Heart left ventricle (tissue), 16 donors: ENCODE measurements at regions of chr1 and their contacts with region 1.

Region 1: GRCh38 chr1:23743287-23744052 is at the start of gene ELOA:
- DNase-seq: peak; percentile 77 to 90 (median 84)
- ATAC-seq: peak; percentile 66 to 97 (median 94)
- H3K4me3 ChIP-seq: peak within 1 kb of the TSS; percentile 84 to 100 (median 96)
- H3K27ac ChIP-seq: peak within 1 kb of the TSS; percentile 88 to 97 (median 94)
- H3K4me1 ChIP-seq: peaks cover 4 to 45% (median 25%) of the 10 kb centered on the region in 12 donors
- H3K27me3 ChIP-seq: no peaks in the 10 kb centered on the region
- CTCF ChIP-seq: no peak
- POLR2A ChIP-seq: peak in 1 of 2 donors; percentile 73
- total RNA-seq, gene ELOA: 28.9 to 45.8 (median 34.3) TPM

Region 2: DNA sequence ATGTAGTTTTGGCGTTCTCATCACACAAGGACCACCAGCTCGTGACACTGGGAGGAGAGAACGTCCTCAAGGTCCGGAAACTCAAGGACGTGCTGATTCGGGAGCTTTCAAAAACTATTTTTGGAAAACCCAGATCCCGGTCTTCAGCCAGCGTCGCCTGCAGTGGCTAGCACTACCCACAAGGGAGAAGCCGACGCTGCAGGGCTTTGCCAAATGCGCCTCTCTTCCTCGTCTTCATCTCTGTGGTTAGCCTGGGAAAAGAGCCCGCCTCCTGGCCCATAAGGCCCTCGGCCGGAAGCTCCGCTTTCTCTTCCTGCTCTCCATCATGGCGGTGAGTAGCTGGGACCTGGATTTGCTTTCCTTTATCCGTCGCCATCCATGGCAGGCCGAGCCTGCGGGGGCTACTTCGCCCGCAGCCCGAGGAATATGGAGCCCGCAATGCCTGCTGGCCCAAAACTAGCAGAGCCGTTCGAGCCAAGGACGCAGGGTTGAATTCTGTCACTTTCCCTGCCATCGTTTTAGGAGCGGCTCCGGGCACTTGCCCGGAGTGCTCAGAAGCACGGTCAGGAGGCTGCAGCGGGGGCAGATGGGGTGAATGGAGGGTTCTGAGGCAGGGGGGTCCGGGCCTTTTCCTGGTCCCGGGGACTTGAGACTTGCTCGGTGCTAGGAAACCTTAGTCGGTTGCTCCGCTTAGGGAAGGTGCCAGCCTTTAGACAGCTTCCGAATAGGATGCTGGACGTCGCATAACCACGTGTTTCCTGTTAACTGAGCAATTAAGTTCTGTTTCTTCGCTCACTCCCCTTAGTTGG is 51.8 kb before region 1 on chr1 and contains the start of gene RPL11:
- intact Hi-C with region 1: loop called in 3 of 10 experiments (anchors 5 kb)
- DNase-seq: peak; percentile 92 to 96 (median 94)
- ATAC-seq: peak; percentile 99 to 100 (median 99)
- H3K4me3 ChIP-seq: peak within 1 kb of the TSS; percentile 58 to 98 (median 82)
- H3K27ac ChIP-seq: peak within 1 kb of the TSS; percentile 64 to 93 (median 81)
- H3K4me1 ChIP-seq: peaks cover 7 to 51% (median 43%) of the 10 kb centered on the region in 12 donors
- H3K27me3 ChIP-seq: no peaks in the 10 kb centered on the region
- CTCF ChIP-seq: peak; percentile 69 to 94 (median 82)
- POLR2A ChIP-seq: peak in 1 of 2 donors; percentile 57
- total RNA-seq, gene RPL11: 341 to 789 (median 680) TPM

Region 3: DNA sequence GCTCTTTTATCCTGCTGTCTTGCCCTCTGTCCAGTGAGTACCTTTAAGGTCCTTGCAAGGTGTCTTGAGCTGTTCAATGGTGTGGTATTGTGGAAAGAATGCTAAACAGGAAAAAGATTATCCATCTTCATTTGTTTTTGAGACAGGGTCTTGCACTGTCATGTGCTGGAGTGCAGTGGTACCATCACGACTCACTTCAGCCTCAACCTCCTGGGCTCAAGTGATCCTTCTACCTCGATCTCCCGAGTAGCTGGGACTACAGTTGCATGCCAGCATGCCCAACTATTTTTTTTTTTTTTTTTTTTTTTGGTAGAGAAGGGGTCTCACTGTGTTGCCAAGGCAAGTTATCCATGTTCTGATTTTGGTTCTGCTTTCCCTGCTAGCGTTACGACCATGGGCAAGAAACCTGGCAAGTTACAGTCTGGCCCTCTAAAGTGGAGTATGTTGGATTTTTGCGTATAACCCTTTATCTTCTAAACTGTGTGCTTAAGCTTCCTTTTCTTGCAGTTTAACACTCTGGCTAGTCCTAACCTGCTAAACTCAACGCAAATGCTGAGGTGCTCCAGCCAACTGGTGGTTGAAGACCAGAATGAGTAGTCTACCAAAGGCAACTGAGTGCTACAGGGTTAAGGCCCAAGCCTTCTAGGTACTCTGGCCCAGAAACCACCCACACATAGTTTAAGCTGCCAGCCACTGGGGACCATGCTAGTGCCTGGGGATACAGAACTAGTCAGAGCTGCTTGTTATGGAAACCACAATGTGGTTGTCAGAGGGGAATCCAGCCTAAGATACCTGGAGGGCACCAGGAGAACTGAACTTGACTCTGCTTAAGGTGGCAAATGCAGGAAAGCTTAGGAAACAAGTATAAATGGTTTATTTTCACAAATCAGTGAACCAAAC is 43.9 kb before region 1 on chr1:
- intact Hi-C with region 1: loop called in 3 of 10 experiments (anchors 5 kb)
- DNase-seq: no peak
- ATAC-seq: peak in 2 of 4 donors; percentile 10 to 27
- H3K4me3 ChIP-seq: no peak overlapping the region
- H3K27ac ChIP-seq: no peak overlapping the region
- H3K4me1 ChIP-seq: peaks cover 0 to 47% (median 24%) of the 10 kb centered on the region in 12 donors
- H3K27me3 ChIP-seq: no peaks in the 10 kb centered on the region
- CTCF ChIP-seq: no peak
- POLR2A ChIP-seq: no peak

Region 4: GRCh38 chr1:23759277-23759676 is 15.8 kb after region 1 on chr1:
- intact Hi-C with region 1: no loop called
- DNase-seq: peak in 4 of 5 donors; percentile 34 to 53 (median 42)
- ATAC-seq: peak; percentile 76 to 82 (median 80)
- H3K4me3 ChIP-seq: no peak overlapping the region
- H3K27ac ChIP-seq: peak overlapping the region in 10 of 12 donors; percentile 3 to 68 (median 30)
- H3K4me1 ChIP-seq: peaks cover 0 to 73% (median 31%) of the 10 kb centered on the region in 12 donors
- H3K27me3 ChIP-seq: no peaks in the 10 kb centered on the region
- CTCF ChIP-seq: no peak
- POLR2A ChIP-seq: no peak

Region 5: GRCh38 chr1:23790696-23791515 is 47.4 kb after region 1 on chr1 and contains the start of gene LYPLA2:
- intact Hi-C with region 1: no loop called
- DNase-seq: peak; percentile 95 to 97 (median 96)
- ATAC-seq: peak; percentile 85 to 96 (median 90)
- H3K4me3 ChIP-seq: peak within 1 kb of the TSS; percentile 48 to 91 (median 78)
- H3K27ac ChIP-seq: peak within 1 kb of the TSS; percentile 26 to 87 (median 71)
- H3K4me1 ChIP-seq: peaks cover 4 to 40% (median 27%) of the 10 kb centered on the region in 12 donors
- H3K27me3 ChIP-seq: no peaks in the 10 kb centered on the region
- CTCF ChIP-seq: peak in 1 of 12 donors; percentile 3
- POLR2A ChIP-seq: peak in 1 of 2 donors; percentile 35
- total RNA-seq, gene LYPLA2: 23.5 to 53.6 (median 29.5) TPM